OCI-LY7 (cell line): ENCODE measurements at regions of chr15 and their contacts with region 1.

Region 1: GRCh38 chr15:43285609-43286037 is 18.9 kb upstream of the TGM5 start:
- DNase-seq: peak; percentile 79
- H3K4me3 ChIP-seq: no peak overlapping the region
- H3K27ac ChIP-seq: no peak overlapping the region
- H3K4me1 ChIP-seq: no peaks in the 10 kb centered on the region
- CTCF ChIP-seq: peak; percentile 93

Region 2: GRCh38 chr15:42704492-42704926 is 581.1 kb before region 1 on chr15:
- CTCF ChIA-PET with region 1: no interaction called
- POLR2A ChIA-PET with region 1: no interaction called
- intact Hi-C with region 1: loop called (anchors 5 kb)
- DNase-seq: peak; percentile 78
- H3K4me3 ChIP-seq: no peak overlapping the region
- H3K27ac ChIP-seq: no peak overlapping the region
- H3K4me1 ChIP-seq: no peaks in the 10 kb centered on the region
- CTCF ChIP-seq: peak; percentile 95

Region 3: DNA sequence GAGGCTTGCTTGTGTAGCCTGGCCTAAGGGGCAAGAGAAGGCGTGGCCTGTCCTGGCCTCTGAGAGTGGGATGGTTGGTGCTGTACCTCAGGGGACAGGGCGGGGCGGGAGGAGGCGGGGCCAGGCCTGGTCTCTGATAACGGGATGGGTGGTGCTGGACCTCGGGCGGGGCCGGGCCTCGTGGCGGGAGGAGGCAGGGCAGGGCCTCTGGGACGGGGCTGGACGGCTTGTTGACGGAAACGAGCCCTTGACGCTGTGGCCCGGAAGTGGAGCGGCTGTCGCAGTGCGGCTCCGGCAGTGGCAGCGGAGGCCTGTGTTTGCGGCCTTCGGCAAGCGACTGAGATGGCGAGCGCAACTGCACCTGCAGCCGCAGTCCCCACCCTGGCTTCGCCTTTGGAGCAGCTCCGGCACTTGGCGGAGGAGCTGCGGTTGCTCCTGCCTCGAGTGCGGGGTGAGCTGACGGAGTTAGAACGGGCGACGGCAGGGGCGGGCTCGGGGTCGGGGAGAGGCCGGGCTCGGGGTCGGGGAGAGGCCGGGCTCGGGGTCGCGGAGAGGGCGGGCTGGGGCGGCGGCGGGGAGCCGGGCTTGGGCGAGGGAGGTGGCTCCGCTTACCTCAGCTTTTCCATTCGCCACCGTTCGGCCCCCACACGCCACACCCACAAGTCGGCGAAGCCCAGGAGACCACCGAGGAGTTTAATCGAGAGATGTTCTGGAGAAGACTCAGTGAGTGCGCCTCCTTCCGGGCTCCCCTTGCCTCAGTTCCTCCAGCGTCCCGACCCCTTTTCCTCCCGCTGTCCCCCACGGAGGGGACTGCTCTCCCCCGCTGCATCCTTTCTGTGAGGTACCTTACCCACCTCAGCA is 100.2 kb before region 1 on chr15 and contains the start of gene CCNDBP1:
- CTCF ChIA-PET with region 1: no interaction called
- POLR2A ChIA-PET with region 1: interaction called, 3 read pairs
- intact Hi-C with region 1: loop called (anchors 1 kb)
- DNase-seq: peak; percentile 92
- H3K4me3 ChIP-seq: peak within 1 kb of the TSS; percentile 86
- H3K27ac ChIP-seq: peak within 1 kb of the TSS; percentile 72
- H3K4me1 ChIP-seq: peaks cover 13% of the 10 kb centered on the region
- CTCF ChIP-seq: peak; percentile 72
- total RNA-seq, gene CCNDBP1: 46.9 and 56.0 TPM in 2 replicates

Region 4: GRCh38 chr15:43225201-43225949 is 60.2 kb before region 1 on chr15:
- CTCF ChIA-PET with region 1: interaction called, 14 read pairs
- POLR2A ChIA-PET with region 1: interaction called, 4 read pairs
- intact Hi-C with region 1: loop called (anchors 1 kb)
- DNase-seq: peak; percentile 60
- H3K4me3 ChIP-seq: no peak overlapping the region
- H3K27ac ChIP-seq: no peak overlapping the region
- H3K4me1 ChIP-seq: no peaks in the 10 kb centered on the region
- CTCF ChIP-seq: peak; percentile 83

Region 5: GRCh38 chr15:43312378-43312777 is 26.8 kb after region 1 on chr15:
- CTCF ChIA-PET with region 1: no interaction called
- POLR2A ChIA-PET with region 1: no interaction called
- intact Hi-C with region 1: no loop called
- DNase-seq: no peak
- H3K4me3 ChIP-seq: no peak overlapping the region
- H3K27ac ChIP-seq: no peak overlapping the region
- H3K4me1 ChIP-seq: no peaks in the 10 kb centered on the region
- CTCF ChIP-seq: no peak

Region 6: DNA sequence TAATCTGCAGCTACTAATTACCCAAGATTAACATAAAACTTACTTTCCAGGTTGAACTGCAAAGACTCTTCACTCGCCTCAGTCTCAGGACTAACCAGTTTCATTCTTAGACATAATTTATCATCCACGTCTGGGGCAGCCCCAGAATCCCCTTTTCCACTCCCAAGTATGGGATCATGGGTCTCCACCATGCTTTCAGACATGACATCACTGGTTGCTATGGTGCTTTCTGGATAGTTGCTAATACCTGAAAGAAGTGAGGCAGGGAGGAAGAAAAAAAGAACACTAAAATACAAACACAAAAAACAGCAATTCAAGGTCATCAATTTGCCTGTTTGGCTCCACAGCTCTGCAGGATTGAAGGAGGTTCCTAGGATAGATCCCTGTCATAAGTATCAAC is 160.7 kb after region 1 on chr15:
- CTCF ChIA-PET with region 1: no interaction called
- POLR2A ChIA-PET with region 1: no interaction called
- intact Hi-C with region 1: no loop called
- DNase-seq: no peak
- H3K4me3 ChIP-seq: no peak overlapping the region
- H3K27ac ChIP-seq: no peak overlapping the region
- H3K4me1 ChIP-seq: no peaks in the 10 kb centered on the region
- CTCF ChIP-seq: no peak